HepG2 (cell line): ENCODE measurements at regions of chr2 and their contacts with region 1.

Region 1: GRCh38 chr2:157596992-157597681 is 31.5 kb downstream of the ACVR1C start:
- DNase-seq: no peak
- ATAC-seq: peak; percentile 90
- H3K4me3 ChIP-seq: no peak overlapping the region
- H3K27ac ChIP-seq: no peak overlapping the region
- H3K4me1 ChIP-seq: no peaks in the 10 kb centered on the region
- H3K27me3 ChIP-seq: no peaks in the 10 kb centered on the region
- CTCF ChIP-seq: peak; percentile 61
- EP300 ChIP-seq: no peak
- POLR2A ChIP-seq: no peak
- RAD21 ChIP-seq: peak; percentile 39; the same call in 1 of the 2 replicates

Region 2: GRCh38 chr2:157492189-157492773 is 104.9 kb before region 1 on chr2:
- CTCF ChIA-PET with region 1: interaction called, 5 read pairs
- POLR2A ChIA-PET with region 1: no interaction called
- in situ Hi-C with region 1: no loop called
- intact Hi-C with region 1: loop called (anchors 1 kb)
- DNase-seq: peak; percentile 56
- ATAC-seq: peak; percentile 99
- H3K4me3 ChIP-seq: no peak overlapping the region
- H3K27ac ChIP-seq: no peak overlapping the region
- H3K4me1 ChIP-seq: no peaks in the 10 kb centered on the region
- H3K27me3 ChIP-seq: no peaks in the 10 kb centered on the region
- CTCF ChIP-seq: peak; percentile 88
- EP300 ChIP-seq: no peak
- POLR2A ChIP-seq: no peak
- RAD21 ChIP-seq: peak; percentile 73

Region 3: GRCh38 chr2:157509744-157510143 is 87.4 kb before region 1 on chr2:
- CTCF ChIA-PET with region 1: no interaction called
- POLR2A ChIA-PET with region 1: no interaction called
- in situ Hi-C with region 1: loop called (anchors 5 kb)
- intact Hi-C with region 1: no loop called
- DNase-seq: no peak
- ATAC-seq: no peak
- H3K4me3 ChIP-seq: no peak overlapping the region
- H3K27ac ChIP-seq: no peak overlapping the region
- H3K4me1 ChIP-seq: no peaks in the 10 kb centered on the region
- H3K27me3 ChIP-seq: no peaks in the 10 kb centered on the region
- CTCF ChIP-seq: 0 out of 2 replicates have a peak, but pooled peaks have one; percentile 9
- EP300 ChIP-seq: no peak
- POLR2A ChIP-seq: no peak
- RAD21 ChIP-seq: no peak